ENCODE measurements at regions of chr2 and their contacts with region 1.

Region 1: DNA sequence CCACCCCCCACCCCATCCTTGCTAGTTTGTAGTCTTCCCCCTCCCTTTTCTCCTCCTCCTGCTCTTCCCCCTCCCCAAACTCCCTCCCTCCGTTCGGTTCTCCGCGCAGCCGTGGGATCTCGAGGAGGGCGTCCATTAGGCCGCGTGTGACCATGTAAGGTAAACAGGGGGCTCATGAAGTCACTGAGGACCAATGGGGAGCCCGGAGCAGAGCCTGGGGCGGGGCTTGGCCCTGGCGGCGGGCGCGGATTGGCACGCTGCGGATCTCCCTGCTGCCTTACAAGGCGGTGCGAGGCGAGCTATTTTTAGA is 246 bp upstream of the KLF7 start:
- DNase-seq: peak; percentile 99
- H3K4me3 Mint-ChIP-seq: peak overlapping the region; percentile 98
- H3K27ac Mint-ChIP-seq: peak overlapping the region; percentile 96
- H3K4me1 Mint-ChIP-seq: peaks cover 46% of the 10 kb centered on the region
- H3K27me3 Mint-ChIP-seq: no peaks in the 10 kb centered on the region

Region 2: DNA sequence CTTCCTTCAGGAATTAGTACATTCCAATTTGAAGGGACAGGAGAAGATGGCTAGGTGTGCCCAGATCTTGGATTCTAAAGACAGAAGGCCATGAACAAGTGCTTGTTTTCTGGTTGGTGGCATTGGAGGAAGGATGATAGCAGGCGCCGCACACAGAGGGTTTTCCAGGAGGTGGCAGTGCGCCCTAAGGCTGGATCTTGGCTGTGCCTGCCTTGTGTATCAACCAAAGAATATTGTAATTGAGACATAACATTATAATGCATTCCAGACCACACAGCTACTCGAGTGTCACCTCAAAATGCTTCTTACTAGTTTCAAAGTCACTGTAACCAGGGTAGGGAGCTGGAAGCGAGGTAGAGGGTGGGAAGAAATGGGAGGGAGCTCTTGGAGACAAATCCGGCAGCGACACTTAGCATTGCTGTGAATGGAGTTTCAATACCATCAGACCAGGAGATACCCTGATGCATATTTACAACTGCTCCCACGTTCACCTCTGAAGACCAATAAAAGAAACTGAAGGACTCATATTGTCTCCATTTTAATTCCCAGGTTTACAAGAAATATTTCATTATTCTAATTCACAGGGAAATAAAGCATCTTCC is 184.2 kb before region 1 on chr2:
- intact Hi-C with region 1: loop called (anchors 10 kb)
- DNase-seq: peak; percentile 84
- H3K4me3 Mint-ChIP-seq: no peak overlapping the region
- H3K27ac Mint-ChIP-seq: no peak overlapping the region
- H3K4me1 Mint-ChIP-seq: peaks cover 8% of the 10 kb centered on the region
- H3K27me3 Mint-ChIP-seq: peaks cover 8% of the 10 kb centered on the region

Region 3: GRCh38 chr2:207055257-207055656 is 110.7 kb before region 1 on chr2:
- intact Hi-C with region 1: no loop called
- DNase-seq: no peak
- H3K4me3 Mint-ChIP-seq: no peak overlapping the region
- H3K27ac Mint-ChIP-seq: no peak overlapping the region
- H3K4me1 Mint-ChIP-seq: no peaks in the 10 kb centered on the region
- H3K27me3 Mint-ChIP-seq: peaks cover 30% of the 10 kb centered on the region

Region 4: GRCh38 chr2:207121784-207122183 is 44.2 kb before region 1 on chr2:
- intact Hi-C with region 1: loop called (anchors 1 kb)
- DNase-seq: no peak
- H3K4me3 Mint-ChIP-seq: no peak overlapping the region
- H3K27ac Mint-ChIP-seq: no peak overlapping the region
- H3K4me1 Mint-ChIP-seq: peaks cover 38% of the 10 kb centered on the region
- H3K27me3 Mint-ChIP-seq: no peaks in the 10 kb centered on the region

Region 5: GRCh38 chr2:207155516-207156444 is 10.2 kb before region 1 on chr2:
- intact Hi-C with region 1: loop called (anchors 1 kb)
- DNase-seq: peak; percentile 69
- H3K4me3 Mint-ChIP-seq: peak overlapping the region; percentile 39
- H3K27ac Mint-ChIP-seq: peak overlapping the region; percentile 26
- H3K4me1 Mint-ChIP-seq: peaks cover 62% of the 10 kb centered on the region
- H3K27me3 Mint-ChIP-seq: peaks cover 2% of the 10 kb centered on the region

Region 6: GRCh38 chr2:207283356-207283755 is 117.4 kb after region 1 on chr2:
- intact Hi-C with region 1: loop called (anchors 1 kb)
- DNase-seq: peak; percentile 64
- H3K4me3 Mint-ChIP-seq: peak overlapping the region; percentile 51
- H3K27ac Mint-ChIP-seq: peak overlapping the region; percentile 84
- H3K4me1 Mint-ChIP-seq: peaks cover 46% of the 10 kb centered on the region
- H3K27me3 Mint-ChIP-seq: no peaks in the 10 kb centered on the region

Region 7: GRCh38 chr2:207334624-207335371 is 168.8 kb after region 1 on chr2:
- intact Hi-C with region 1: loop called (anchors 1 kb)
- DNase-seq: peak; percentile 68
- H3K4me3 Mint-ChIP-seq: peak overlapping the region; percentile 52
- H3K27ac Mint-ChIP-seq: peak overlapping the region; percentile 86
- H3K4me1 Mint-ChIP-seq: peaks cover 68% of the 10 kb centered on the region
- H3K27me3 Mint-ChIP-seq: no peaks in the 10 kb centered on the region

Region 8: DNA sequence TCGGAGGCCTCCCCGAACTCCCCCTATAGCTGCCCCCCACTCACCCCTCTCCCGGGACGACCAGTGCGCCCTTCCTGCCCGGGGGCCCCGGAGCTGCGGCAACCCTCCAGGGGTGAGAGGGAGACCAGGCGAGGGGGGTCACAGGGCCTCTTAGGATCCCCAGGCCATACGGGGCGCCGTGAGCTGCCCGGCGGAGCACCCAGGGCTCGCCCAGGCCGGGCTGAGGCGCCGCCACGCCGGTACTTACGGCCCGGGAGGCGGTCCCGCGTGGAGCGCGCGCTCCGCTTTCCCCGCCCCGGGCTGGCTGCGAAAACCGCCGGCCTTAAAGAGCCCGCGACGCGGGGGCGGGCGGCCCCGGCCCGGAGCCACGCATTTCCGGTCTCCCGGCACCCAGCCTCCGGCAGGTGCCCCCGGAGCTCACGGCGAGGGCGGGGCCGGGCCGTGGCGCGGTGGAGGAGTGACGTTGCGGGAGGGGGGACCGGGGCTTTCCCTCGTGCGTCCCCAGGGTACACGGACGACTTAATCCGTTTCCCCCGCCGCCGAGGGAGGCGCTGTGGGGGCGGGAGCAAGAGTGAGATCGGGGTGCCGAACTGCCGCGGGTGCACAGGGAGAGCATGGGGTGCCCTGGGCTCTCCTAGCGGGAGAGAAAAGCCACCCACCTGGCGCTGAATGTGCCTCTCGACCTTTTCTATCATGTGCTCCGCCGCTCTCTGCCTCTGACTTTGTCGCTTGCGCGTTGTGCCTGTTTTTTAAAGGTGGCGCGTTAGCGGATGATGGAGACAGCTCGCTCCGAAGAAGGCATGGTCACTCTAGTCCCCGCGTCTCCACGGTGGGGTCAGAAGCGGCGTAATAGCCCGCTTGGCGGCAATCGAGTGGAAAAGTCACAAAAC is 459.3 kb after region 1 on chr2 and contains the start of gene METTL21A:
- intact Hi-C with region 1: loop called (anchors 10 kb)
- DNase-seq: peak; percentile 98
- H3K4me3 Mint-ChIP-seq: peak within 1 kb of the TSS; percentile 95
- H3K27ac Mint-ChIP-seq: peak within 1 kb of the TSS; percentile 98
- H3K4me1 Mint-ChIP-seq: peaks cover 32% of the 10 kb centered on the region
- H3K27me3 Mint-ChIP-seq: no peaks in the 10 kb centered on the region
- total RNA-seq, gene METTL21A: 37.9 and 42.6 TPM in 2 replicates

Measured in activated CD4-positive, alpha-beta T cell treated with anti-CD3 and anti-CD28 coated beads, Interleukin-2, amount 10 ng/mL, durations not matched to agents 24 days and 14 days (primary cell).